A673 (cell line): ENCODE measurements at regions of chr5 and their contacts with region 1.

Region 1: DNA sequence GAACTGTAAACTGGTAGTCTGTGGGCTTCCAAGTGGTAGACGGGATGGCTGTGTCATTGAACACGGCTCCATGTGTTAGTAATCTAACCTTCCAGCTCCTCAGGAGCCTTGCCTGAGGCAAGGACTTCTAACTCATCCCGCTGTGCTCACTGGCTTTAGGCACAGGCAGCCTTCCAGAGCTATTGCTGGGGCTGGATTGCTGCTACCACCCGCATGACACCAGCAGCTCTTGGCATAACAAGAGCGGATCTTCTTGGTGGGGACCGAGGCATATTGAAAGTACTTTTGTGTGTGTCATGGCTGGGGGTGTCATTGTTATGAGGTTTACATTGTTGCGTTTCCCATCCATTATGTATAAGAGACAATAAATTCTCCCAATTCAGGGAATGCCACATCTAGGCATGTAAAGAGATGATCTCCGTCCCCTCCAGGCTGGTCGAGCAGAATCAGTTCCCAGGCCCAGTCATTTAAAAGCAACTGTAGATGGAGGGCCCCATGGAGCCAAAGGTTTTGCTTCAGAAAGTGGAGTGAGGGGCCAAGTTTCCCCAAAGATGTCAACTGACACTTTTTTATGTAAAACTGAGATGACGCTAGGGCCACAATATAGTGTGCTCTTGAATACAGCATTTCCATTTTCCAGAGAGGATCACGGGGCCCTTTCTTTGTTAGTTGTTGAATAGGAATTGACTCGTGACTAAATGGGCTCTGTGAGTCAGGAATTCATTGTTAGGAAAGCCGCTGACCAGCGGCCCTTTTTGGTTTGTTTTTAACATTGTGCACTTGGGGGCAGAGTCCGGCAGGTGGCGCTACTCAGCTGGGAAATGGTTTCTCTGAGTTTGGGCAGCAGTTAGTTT is 759.6 kb downstream of the TAF11L14 start:
- DNase-seq: peak; percentile 64
- H3K4me3 ChIP-seq: no peak overlapping the region
- H3K27ac ChIP-seq: no peak overlapping the region
- H3K4me1 ChIP-seq: no peaks in the 10 kb centered on the region
- H3K27me3 ChIP-seq: no peaks in the 10 kb centered on the region
- CTCF ChIP-seq: peak; percentile 90

Region 2: GRCh38 chr5:18699681-18700080 is 305.9 kb after region 1 on chr5:
- CTCF ChIA-PET with region 1: no interaction called
- POLR2A ChIA-PET with region 1: interaction called, 3 read pairs
- intact Hi-C with region 1: loop called (anchors 2 kb)
- DNase-seq: no peak
- H3K4me3 ChIP-seq: no peak overlapping the region
- H3K27ac ChIP-seq: no peak overlapping the region
- H3K4me1 ChIP-seq: no peaks in the 10 kb centered on the region
- H3K27me3 ChIP-seq: no peaks in the 10 kb centered on the region
- CTCF ChIP-seq: no peak

Region 3: GRCh38 chr5:19608444-19609002 is 1214.7 kb after region 1 on chr5:
- CTCF ChIA-PET with region 1: interaction called, 3 read pairs
- POLR2A ChIA-PET with region 1: no interaction called
- intact Hi-C with region 1: loop called (anchors 5 kb)
- DNase-seq: peak; percentile 9
- H3K4me3 ChIP-seq: no peak overlapping the region
- H3K27ac ChIP-seq: no peak overlapping the region
- H3K4me1 ChIP-seq: no peaks in the 10 kb centered on the region
- H3K27me3 ChIP-seq: no peaks in the 10 kb centered on the region
- CTCF ChIP-seq: peak; percentile 33; the same call in 1 of the 2 replicates